Posterior cingulate gyrus (tissue), 11 donors: ENCODE measurements at regions of chr7 and their contacts with region 1.

Region 1: DNA sequence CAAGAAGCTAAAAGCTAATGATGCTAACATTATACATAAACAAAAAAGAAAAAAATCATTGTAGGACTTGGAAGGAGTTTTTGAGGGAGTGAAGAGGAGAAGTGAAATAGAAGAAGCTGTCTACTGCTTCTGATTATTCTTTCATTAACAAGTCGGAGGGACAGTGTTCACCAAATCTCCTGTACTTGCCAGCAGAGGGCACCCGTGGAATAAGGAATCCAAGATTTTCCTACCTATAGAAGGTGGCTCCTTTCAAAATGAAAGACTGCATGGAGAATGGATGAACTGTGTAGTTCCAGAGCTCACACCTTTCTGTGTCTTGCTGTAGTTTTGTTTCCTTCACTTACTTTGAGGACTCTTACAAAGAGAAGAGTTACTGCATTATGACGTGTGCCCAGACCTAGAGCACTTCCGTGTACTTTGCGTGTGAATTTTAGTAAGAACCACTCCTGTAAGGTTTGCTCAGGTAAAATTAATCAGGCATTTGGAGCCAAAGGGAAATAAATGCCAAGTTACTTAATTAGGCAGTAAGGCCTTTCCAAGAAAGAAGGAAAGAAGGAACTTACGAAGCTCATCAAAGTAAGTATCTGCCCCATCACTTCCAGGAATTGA is 145.1 kb downstream of the SEMA3D start:
- DNase-seq: peak in 9 of 10 donors; percentile 13 to 92 (median 68)

Region 2: GRCh38 chr7:84746353-84746752 is 295.4 kb before region 1 on chr7:
- intact Hi-C with region 1: no loop called
- DNase-seq: no peak

Region 3: GRCh38 chr7:85454904-85455303 is 413.2 kb after region 1 on chr7:
- intact Hi-C with region 1: loop called (anchors 10 kb)
- DNase-seq: no peak

Region 4: GRCh38 chr7:85489498-85489897 is 447.8 kb after region 1 on chr7:
- intact Hi-C with region 1: no loop called
- DNase-seq: no peak

Region 5: DNA sequence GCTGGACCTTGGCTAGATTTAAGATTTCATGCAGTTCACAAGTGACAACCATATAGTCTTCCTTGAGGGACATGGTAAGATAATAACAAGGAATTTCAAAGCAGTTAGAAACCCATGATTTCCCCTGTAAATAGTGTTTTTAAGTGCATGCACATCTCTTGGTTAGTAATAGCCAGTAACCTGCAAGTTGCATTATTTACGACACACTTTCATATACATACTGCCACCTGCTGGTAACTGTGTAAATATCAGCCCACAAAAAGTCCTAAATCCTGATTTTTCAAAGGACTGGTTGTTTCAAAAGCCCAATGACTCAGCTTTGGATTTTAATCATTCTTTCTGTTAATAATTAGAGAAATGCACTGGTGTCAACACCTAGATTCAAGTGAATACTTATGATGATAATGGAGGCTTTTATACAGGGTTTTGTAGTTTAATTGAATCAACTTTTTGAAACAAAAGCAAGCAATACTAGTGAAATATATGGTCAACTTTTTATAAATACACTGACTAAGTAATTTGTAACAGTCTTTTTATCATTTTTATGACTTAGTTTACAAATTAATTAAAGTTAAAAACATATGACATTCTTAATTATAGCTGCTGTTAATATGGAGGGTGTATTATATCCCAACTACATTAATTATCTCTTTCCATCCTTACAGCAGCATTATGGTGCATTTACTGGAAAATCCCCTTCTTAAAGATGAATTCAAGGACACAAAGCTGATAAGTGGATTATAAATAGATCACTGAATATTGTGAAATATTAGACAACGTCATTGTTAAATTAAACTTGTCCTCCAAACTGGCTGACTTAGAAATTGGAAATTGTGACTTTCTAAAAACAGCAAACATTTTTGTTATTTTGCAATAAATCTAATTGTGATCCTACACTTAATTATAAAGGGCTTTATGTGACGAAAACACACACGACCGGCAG is 512.8 kb after region 1 on chr7:
- intact Hi-C with region 1: loop called (anchors 1 kb)
- DNase-seq: no peak